PC-3 (cell line): ENCODE measurements at regions of chr7 and their contacts with region 1.

Region 1: GRCh38 chr7:100215895-100216294 is 3.9 kb upstream of the PVRIG start:
- DNase-seq: no peak
- ATAC-seq: no peak
- H3K4me3 ChIP-seq: no peak overlapping the region
- H3K27ac ChIP-seq: no peak overlapping the region
- H3K4me1 ChIP-seq: 0 out of 2 replicates have a peak, but pooled peaks cover 7% of the 10 kb centered on the region
- H3K27me3 ChIP-seq: no peaks in the 10 kb centered on the region
- CTCF ChIP-seq: no peak

Region 2: GRCh38 chr7:100132697-100133151 is 83.2 kb before region 1 on chr7:
- CTCF ChIA-PET with region 1: no interaction called
- POLR2A ChIA-PET with region 1: no interaction called
- intact Hi-C with region 1: loop called (anchors 2 kb)
- DNase-seq: peak; percentile 68
- ATAC-seq: peak; percentile 80
- H3K4me3 ChIP-seq: no peak overlapping the region
- H3K27ac ChIP-seq: no peak overlapping the region
- H3K4me1 ChIP-seq: 0 out of 2 replicates have a peak, but pooled peaks cover 4% of the 10 kb centered on the region
- H3K27me3 ChIP-seq: no peaks in the 10 kb centered on the region
- CTCF ChIP-seq: peak; percentile 87